Right cardiac atrium (tissue), 5 donors: ENCODE measurements at regions of chr9 and their contacts with region 1.

Region 1: DNA sequence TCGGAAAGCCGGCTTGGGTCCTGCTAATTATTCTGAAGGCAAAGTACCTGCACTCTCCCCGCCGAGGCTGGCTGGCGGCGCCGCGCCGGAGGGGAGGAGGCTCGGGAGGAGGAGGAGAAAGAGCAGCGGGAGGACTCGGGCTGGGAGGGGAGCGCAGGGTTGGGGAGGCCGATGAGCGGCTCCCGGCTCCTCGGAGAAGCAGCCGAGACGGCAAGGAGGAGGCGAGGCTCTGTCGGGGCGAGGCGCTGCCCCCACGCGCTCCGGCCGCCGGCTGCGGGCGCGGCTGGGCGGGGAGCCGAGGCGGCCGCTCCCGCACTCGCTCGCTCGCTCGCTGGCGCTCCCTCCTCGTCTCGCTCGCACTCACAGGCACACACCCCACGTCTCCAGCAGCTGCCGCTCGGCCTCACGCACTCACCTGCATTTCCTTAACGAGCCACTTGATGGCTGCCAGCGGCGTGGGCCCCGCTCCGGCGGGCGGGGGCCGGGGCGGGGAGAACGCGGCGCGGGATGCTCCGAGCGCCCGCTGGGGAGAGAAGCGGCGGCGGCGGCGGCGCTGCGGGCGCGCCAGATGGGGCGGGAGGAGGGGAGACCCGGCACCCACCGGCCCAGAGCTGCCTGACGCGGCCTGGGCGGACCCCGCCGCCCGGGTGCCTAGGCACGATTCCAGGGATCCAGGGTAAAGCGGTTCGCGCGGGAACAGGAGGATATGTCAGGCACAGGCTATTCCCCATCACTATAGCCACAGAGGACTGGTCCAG is at the start of gene PTPRD:
- DNase-seq: peak; percentile 15 to 54 (median 41)
- ATAC-seq: peak; percentile 32 to 45
- H3K4me3 ChIP-seq: peak within 1 kb of the TSS; percentile 81
- H3K27ac ChIP-seq: no peak within 1 kb of the TSS
- H3K4me1 ChIP-seq: no peaks in the 10 kb centered on the region
- H3K27me3 ChIP-seq: peaks cover 2% of the 10 kb centered on the region
- total RNA-seq, gene PTPRD: 5.2 to 11.8 (median 7.8) TPM

Region 2: GRCh38 chr9:10678790-10679189 is 66.0 kb after region 1 on chr9:
- intact Hi-C with region 1: loop called in 1 of 4 experiments (anchors 10 kb)
- DNase-seq: no peak
- ATAC-seq: no peak
- H3K4me3 ChIP-seq: no peak overlapping the region
- H3K27ac ChIP-seq: no peak overlapping the region
- H3K4me1 ChIP-seq: no peaks in the 10 kb centered on the region
- H3K27me3 ChIP-seq: no peaks in the 10 kb centered on the region